ENCODE measurements at regions of chr10 and their contacts with region 1.

Region 1: DNA sequence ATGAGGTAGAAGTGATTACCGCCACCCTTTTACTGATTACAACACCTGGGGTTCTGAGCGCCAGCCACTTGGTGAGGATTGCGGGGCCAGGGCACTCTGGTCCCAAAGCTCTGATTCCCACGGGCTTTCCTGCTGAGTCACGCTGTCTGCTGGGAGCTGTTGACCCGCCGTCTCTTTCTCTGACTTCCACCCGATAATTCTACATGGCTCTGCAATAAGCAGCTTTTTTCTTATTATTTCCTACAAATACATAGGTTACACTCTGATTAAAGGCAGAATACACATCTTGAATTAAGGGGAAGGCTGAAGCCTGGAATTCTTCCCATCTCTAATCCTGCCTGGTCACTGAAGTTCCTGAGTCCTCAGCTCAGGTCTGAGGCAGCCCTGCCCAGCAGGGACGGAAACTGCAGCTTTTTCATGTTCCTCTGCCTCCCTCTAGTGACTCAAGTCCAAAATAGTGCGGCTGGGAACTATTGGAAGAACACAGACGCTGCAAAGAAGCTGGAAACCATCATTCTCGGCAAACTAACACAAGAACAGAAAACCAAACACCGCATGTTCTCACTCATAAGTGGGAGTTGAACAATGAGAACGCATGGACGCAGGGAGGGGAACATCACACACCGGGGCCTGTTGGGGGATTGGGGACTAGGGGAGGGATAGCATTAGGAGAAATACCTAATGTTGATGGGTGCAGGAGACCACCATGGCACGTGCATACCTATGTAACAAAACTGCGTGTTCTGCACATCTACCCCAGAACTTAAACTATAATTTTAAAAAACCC is 178.3 kb downstream of the PRKCQ start:
- DNase-seq: peak; percentile 85
- ATAC-seq: peak; percentile 88
- H3K4me3 ChIP-seq: peak overlapping the region in 2 of 5 experiments; percentile 5 to 12
- H3K4me3 Mint-ChIP-seq: peak overlapping the region; percentile 75
- H3K27ac ChIP-seq: no peak overlapping the region
- H3K27ac Mint-ChIP-seq: peak overlapping the region; percentile 10
- H3K4me1 ChIP-seq: peaks cover 26% of the 10 kb centered on the region in 2 donors
- H3K4me1 Mint-ChIP-seq: peaks cover 33% of the 10 kb centered on the region
- H3K27me3 ChIP-seq: peaks cover 0 to 4% (median 2%) of the 10 kb centered on the region in 4 experiments
- H3K27me3 Mint-ChIP-seq: peaks cover 22% of the 10 kb centered on the region
- CTCF ChIP-seq: peak; percentile 82

Region 2: DNA sequence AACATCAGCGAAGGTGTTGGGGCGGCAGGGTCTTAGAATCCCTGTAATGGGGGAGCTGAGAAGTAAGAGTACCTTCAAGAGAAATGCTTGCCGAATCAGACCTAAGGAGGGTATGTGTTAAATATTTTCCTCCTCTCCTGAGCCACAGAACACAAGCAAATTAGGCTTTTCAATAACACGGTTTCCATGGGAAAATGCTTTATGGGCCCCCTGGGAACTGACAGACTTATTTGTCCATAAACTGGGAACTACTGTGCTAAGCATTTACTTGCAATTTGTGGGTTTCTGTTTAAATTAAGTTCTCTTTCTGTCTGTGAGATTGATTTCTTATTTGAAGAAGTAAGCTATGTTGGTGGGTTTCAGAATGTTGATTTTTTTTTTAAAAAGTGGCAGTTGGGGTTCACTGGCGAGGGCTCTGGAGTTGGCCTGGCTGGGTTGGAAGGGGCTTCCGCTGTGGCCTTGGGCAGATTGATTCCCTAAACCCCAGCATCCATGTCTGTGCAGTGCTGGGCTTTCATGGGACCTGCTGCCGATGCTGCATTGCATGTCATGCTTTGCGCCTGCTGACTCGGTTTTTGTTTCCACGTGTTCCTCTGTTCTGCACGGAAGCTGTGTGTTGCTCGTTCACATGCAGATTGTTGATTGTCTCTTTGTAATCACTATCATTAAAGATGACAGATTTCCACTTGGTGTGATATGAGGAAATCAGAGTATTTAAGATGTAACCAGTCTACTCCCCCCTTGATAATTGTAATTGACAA is 305.8 kb before region 1 on chr10:
- CTCF ChIA-PET with region 1: interaction called, 13 read pairs
- POLR2A ChIA-PET with region 1: no interaction called
- intact Hi-C with region 1: no loop called
- DNase-seq: no peak
- ATAC-seq: no peak
- H3K4me3 ChIP-seq: no peak overlapping the region
- H3K4me3 Mint-ChIP-seq: no peak overlapping the region
- H3K27ac ChIP-seq: no peak overlapping the region
- H3K27ac Mint-ChIP-seq: peak overlapping the region; percentile 21
- H3K4me1 ChIP-seq: peaks cover 9 to 11% of the 10 kb centered on the region in 2 donors
- H3K4me1 Mint-ChIP-seq: peaks cover 50% of the 10 kb centered on the region
- H3K27me3 ChIP-seq: no peaks in the 10 kb centered on the region
- H3K27me3 Mint-ChIP-seq: no peaks in the 10 kb centered on the region
- CTCF ChIP-seq: no peak

Region 3: DNA sequence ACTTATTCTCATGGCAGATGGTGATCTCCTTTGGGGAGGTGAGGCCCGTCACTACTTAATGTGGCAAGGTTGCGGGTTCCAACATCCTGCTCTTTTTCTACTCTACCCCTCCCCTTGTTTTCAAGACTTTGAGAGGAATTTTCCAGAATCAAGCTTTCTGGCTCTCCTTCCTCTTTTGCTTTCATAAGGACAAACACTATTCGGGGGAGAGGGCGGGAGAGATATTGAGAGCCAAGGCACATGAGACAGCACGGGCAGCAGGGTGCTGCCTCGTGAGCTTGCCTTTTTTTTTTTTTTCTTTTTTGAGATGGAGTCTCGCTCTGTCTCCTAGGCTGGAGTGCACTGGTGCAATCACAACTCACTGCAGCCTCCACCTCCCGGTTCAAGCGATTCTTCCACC is 205.9 kb before region 1 on chr10:
- CTCF ChIA-PET with region 1: interaction called, 325 read pairs
- POLR2A ChIA-PET with region 1: interaction called, 72 read pairs
- intact Hi-C with region 1: no loop called
- DNase-seq: no peak
- ATAC-seq: no peak
- H3K4me3 ChIP-seq: no peak overlapping the region
- H3K4me3 Mint-ChIP-seq: no peak overlapping the region
- H3K27ac ChIP-seq: no peak overlapping the region
- H3K27ac Mint-ChIP-seq: no peak overlapping the region
- H3K4me1 ChIP-seq: peaks cover 6 to 10% of the 10 kb centered on the region in 2 donors
- H3K4me1 Mint-ChIP-seq: peaks cover 16% of the 10 kb centered on the region
- H3K27me3 ChIP-seq: no peaks in the 10 kb centered on the region
- H3K27me3 Mint-ChIP-seq: no peaks in the 10 kb centered on the region
- CTCF ChIP-seq: no peak

Region 4: DNA sequence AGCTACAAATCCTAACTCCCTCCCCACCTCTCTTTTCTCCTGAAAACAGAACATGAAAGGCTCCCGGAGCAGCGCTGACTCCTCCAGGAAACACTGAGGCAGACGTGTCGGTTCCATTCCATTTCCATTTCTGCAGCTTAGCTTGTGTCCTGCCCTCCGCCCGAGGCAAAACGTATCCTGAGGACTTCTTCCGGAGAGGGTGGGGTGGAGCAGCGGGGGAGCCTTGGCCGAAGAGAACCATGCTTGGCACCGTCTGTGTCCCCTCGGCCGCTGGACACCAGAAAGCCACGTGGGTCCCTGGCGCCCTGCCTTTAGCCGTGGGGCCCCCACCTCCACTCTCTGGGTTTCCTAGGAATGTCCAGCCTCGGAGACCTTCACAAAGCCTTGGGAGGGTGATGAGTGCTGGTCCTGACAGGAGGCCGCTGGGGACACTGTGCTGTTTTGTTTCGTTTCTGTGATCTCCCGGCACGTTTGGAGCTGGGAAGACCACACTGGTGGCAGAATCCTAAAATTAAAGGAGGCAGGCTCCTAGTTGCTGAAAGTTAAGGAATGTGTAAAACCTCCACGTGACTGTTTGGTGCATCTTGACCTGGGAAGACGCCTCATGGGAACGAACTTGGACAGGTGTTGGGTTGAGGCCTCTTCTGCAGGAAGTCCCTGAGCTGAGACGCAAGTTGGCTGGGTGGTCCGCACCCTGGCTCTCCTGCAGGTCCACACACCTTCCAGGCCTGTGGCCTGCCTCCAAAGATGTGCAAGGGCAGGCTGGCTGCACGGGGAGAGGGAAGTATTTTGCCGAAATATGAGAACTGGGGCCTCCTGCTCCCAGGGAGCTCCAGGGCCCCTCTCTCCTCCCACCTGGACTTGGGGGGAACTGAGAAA is 168.7 kb before region 1 on chr10:
- CTCF ChIA-PET with region 1: interaction called, 21 read pairs
- POLR2A ChIA-PET with region 1: no interaction called
- intact Hi-C with region 1: no loop called
- DNase-seq: no peak
- ATAC-seq: no peak
- H3K4me3 ChIP-seq: no peak overlapping the region
- H3K4me3 Mint-ChIP-seq: no peak overlapping the region
- H3K27ac ChIP-seq: no peak overlapping the region
- H3K27ac Mint-ChIP-seq: no peak overlapping the region
- H3K4me1 ChIP-seq: no peaks in the 10 kb centered on the region
- H3K4me1 Mint-ChIP-seq: no peaks in the 10 kb centered on the region
- H3K27me3 ChIP-seq: no peaks in the 10 kb centered on the region
- H3K27me3 Mint-ChIP-seq: no peaks in the 10 kb centered on the region
- CTCF ChIP-seq: no peak

Region 5: GRCh38 chr10:6305401-6306321 is 96.1 kb before region 1 on chr10:
- CTCF ChIA-PET with region 1: interaction called, 36 read pairs
- POLR2A ChIA-PET with region 1: interaction called, 3 read pairs
- intact Hi-C with region 1: loop called (anchors 1 kb)
- DNase-seq: peak; percentile 37
- ATAC-seq: peak; percentile 73
- H3K4me3 ChIP-seq: no peak overlapping the region
- H3K4me3 Mint-ChIP-seq: peak overlapping the region; percentile 72
- H3K27ac ChIP-seq: no peak overlapping the region
- H3K27ac Mint-ChIP-seq: peak overlapping the region; percentile 73
- H3K4me1 ChIP-seq: peaks cover 34 to 51% of the 10 kb centered on the region in 2 donors
- H3K4me1 Mint-ChIP-seq: peaks cover 51% of the 10 kb centered on the region
- H3K27me3 ChIP-seq: no peaks in the 10 kb centered on the region
- H3K27me3 Mint-ChIP-seq: no peaks in the 10 kb centered on the region
- CTCF ChIP-seq: no peak

Region 6: DNA sequence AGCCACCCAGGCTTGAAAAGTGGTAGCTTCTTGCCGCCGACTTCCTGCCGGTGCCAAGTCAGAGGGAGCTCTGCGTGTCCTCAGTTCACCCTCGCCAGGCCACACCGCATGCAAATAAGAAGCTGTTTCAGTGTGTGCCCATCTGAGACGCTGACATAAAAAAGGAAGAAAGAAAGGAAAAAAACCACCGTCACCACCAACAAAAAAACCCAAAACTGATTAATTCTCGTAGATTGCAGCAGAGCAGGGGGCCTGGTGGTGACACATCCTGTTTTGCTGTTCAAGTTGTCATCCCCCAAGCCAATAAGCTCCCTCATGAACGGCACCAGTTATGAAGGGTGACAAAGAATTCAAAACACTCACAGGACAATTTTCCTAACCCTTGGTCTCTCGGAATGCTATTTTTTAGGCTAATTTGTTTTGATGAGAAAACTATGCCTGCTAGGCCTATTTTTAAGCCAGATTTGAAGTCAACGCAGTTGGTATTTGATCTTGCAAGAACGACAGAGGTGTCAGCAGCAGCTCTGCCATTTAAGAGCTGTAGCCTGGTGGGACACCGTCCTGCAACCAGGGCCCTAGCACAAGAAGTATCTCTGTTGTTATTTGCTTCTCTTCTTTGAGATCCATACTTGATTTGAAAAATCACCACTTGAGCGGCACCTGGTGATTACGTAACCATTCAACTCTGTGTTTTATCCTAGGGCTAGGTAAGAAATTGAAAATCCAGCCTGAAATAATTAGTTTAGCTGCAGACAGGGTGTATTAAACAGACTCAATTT is 53.5 kb before region 1 on chr10:
- CTCF ChIA-PET with region 1: interaction called, 158 read pairs
- POLR2A ChIA-PET with region 1: interaction called, 25 read pairs
- intact Hi-C with region 1: loop called (anchors 1 kb)
- DNase-seq: peak; percentile 95
- ATAC-seq: peak; percentile 90
- H3K4me3 ChIP-seq: peak overlapping the region; percentile 1 to 49 (median 9)
- H3K4me3 Mint-ChIP-seq: peak overlapping the region; percentile 75
- H3K27ac ChIP-seq: peak overlapping the region; percentile 80 to 81
- H3K27ac Mint-ChIP-seq: peak overlapping the region; percentile 96
- H3K4me1 ChIP-seq: peaks cover 42 to 49% of the 10 kb centered on the region in 2 donors
- H3K4me1 Mint-ChIP-seq: peaks cover 52% of the 10 kb centered on the region
- H3K27me3 ChIP-seq: peaks cover 0 to 11% (median 0%) of the 10 kb centered on the region in 4 experiments
- H3K27me3 Mint-ChIP-seq: peaks cover 3% of the 10 kb centered on the region
- CTCF ChIP-seq: no peak